ENCODE measurements at regions of chr1 and their contacts with region 1.

Region 1: GRCh38 chr1:230066466-230067404 is at the start of gene GALNT2:
- DNase-seq: peak; percentile 73 to 85
- ATAC-seq: peak; percentile 76 to 77
- H3K4me3 ChIP-seq: peak within 1 kb of the TSS; percentile 73 to 88 (median 80)
- H3K27ac ChIP-seq: peak within 1 kb of the TSS; percentile 90 to 97 (median 97)
- H3K4me1 ChIP-seq: peaks cover 42 to 43% of the 10 kb centered on the region in 2 donors
- H3K27me3 ChIP-seq: no peaks in the 10 kb centered on the region
- CTCF ChIP-seq: peak in 1 of 5 experiments; percentile 11
- POLR2A ChIP-seq: peak; percentile 94 to 96
- total RNA-seq, gene GALNT2: 73.7 to 106 (median 78.3) TPM

Region 2: GRCh38 chr1:229625915-229626831 is 440.6 kb before region 1 on chr1 and contains the starts of genes TAF5L and URB2:
- in situ Hi-C with region 1: no loop called
- intact Hi-C with region 1: loop called (anchors 2 kb)
- DNase-seq: peak; percentile 80 to 85
- ATAC-seq: peak; percentile 77 to 82
- H3K4me3 ChIP-seq: peak within 1 kb of the TSS; percentile 92 to 100 (median 98)
- H3K27ac ChIP-seq: peak within 1 kb of the TSS; percentile 92 to 99 (median 96)
- H3K4me1 ChIP-seq: peaks cover 49 to 51% of the 10 kb centered on the region in 2 donors
- H3K27me3 ChIP-seq: no peaks in the 10 kb centered on the region
- CTCF ChIP-seq: peak in 3 of 5 experiments; percentile 24 to 35 (median 28)
- POLR2A ChIP-seq: peak; percentile 86 to 91
- total RNA-seq, gene TAF5L: 14.5 to 37.4 (median 24.3) TPM
- total RNA-seq, gene URB2: 9.9 to 20.6 (median 13.4) TPM

Region 3: DNA sequence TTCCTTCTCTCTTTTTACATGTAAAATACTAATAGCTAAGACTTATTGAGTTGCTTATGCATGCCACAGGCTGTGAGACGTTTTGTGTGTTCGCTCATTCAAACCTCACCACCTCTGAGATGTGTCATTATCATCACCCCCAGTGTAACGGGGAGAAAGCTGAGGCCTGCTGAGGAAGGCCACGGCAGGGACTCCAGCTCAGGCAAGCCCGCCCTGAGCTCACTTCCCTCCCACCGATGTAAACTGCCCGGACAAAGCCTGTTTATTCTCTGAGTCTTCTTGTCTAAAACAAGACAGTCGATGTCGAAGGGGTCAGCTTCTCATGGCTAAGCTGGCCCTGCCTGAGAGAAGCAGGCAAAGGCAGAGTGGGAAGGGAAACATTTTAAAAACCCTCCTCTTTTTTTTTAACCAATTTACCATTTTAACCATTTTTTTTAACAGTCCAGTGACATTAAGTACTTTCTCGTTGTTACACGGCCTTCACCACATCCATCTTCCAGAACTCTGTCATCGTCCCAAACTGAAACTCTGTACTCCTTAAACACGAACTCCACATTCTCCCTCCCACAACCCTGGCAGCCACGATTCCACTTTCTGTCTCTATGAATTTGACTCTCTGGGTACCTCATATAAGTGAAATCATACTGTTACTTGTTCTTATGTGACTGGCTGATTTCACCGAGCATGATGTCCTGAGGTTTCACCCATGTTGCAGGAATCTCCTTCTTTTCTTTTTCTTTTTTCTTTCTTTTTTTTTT is 204.5 kb before region 1 on chr1:
- in situ Hi-C with region 1: no loop called
- intact Hi-C with region 1: loop called (anchors 5 kb)
- DNase-seq: no peak
- ATAC-seq: no peak
- H3K4me3 ChIP-seq: no peak overlapping the region
- H3K27ac ChIP-seq: peak overlapping the region; percentile 86 to 96 (median 93)
- H3K4me1 ChIP-seq: peaks cover 43% of the 10 kb centered on the region in 2 donors
- H3K27me3 ChIP-seq: no peaks in the 10 kb centered on the region
- CTCF ChIP-seq: no peak
- POLR2A ChIP-seq: no peak

Region 4: GRCh38 chr1:229887043-229887822 is 179.5 kb before region 1 on chr1:
- in situ Hi-C with region 1: no loop called
- intact Hi-C with region 1: loop called (anchors 2 kb)
- DNase-seq: peak; percentile 78 to 88
- ATAC-seq: peak; percentile 84 to 86
- H3K4me3 ChIP-seq: no peak overlapping the region
- H3K27ac ChIP-seq: peak overlapping the region; percentile 84 to 97 (median 95)
- H3K4me1 ChIP-seq: peaks cover 42 to 55% of the 10 kb centered on the region in 2 donors
- H3K27me3 ChIP-seq: no peaks in the 10 kb centered on the region
- CTCF ChIP-seq: no peak
- POLR2A ChIP-seq: no peak

Region 5: DNA sequence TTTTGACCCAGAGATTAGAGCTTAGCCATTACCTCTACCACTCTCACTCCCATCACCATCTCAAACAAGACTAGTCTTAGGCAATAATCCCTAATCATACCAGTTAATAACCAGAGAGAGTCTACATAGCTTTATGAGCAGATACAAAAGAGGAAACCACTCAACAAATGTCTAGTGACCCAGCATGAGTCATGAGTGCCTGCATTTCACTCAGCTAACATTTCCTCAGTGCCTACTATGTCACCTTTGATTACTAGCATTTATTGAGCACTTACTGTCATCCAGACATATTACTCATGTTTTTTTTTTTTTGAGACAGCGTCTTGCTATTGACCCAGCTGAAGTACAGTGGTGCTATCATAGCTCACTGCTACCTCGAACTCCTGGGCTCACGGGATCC is 35.6 kb before region 1 on chr1:
- in situ Hi-C with region 1: no loop called
- intact Hi-C with region 1: no loop called
- DNase-seq: no peak
- ATAC-seq: no peak
- H3K4me3 ChIP-seq: no peak overlapping the region
- H3K27ac ChIP-seq: no peak overlapping the region
- H3K4me1 ChIP-seq: no peaks in the 10 kb centered on the region
- H3K27me3 ChIP-seq: no peaks in the 10 kb centered on the region
- CTCF ChIP-seq: no peak
- POLR2A ChIP-seq: no peak

Region 6: GRCh38 chr1:230104395-230105244 is 37.9 kb after region 1 on chr1:
- in situ Hi-C with region 1: no loop called
- intact Hi-C with region 1: loop called (anchors 2 kb)
- DNase-seq: peak; percentile 98 to 100
- ATAC-seq: peak; percentile 89 to 93
- H3K4me3 ChIP-seq: peak overlapping the region; percentile 5 to 25 (median 15)
- H3K27ac ChIP-seq: peak overlapping the region; percentile 83 to 89 (median 84)
- H3K4me1 ChIP-seq: peaks cover 54 to 57% of the 10 kb centered on the region in 2 donors
- H3K27me3 ChIP-seq: no peaks in the 10 kb centered on the region
- CTCF ChIP-seq: peak in 3 of 5 experiments; percentile 14 to 45 (median 25)
- POLR2A ChIP-seq: peak in 1 of 2 donors; percentile 33

Region 7: GRCh38 chr1:230303822-230304221 is 237.1 kb after region 1 on chr1:
- in situ Hi-C with region 1: no loop called
- intact Hi-C with region 1: loop called (anchors 2 kb)
- DNase-seq: peak; percentile 31 to 34
- ATAC-seq: peak; percentile 82 to 92
- H3K4me3 ChIP-seq: no peak overlapping the region
- H3K27ac ChIP-seq: peak overlapping the region; percentile 41 to 71 (median 58)
- H3K4me1 ChIP-seq: peaks cover 10 to 20% of the 10 kb centered on the region in 2 donors
- H3K27me3 ChIP-seq: no peaks in the 10 kb centered on the region
- CTCF ChIP-seq: no peak
- POLR2A ChIP-seq: no peak

Measured in gastrocnemius medialis (tissue), 4 donors.